PC-9 (cell line): ENCODE measurements at regions of chr11 and their contacts with region 1.

Region 1: GRCh38 chr11:108497317-108498045 is 703 bp downstream of the POGLUT3 start:
- DNase-seq: peak; percentile 83 to 98
- H3K4me3 ChIP-seq: peak overlapping the region; percentile 78
- H3K27ac ChIP-seq: peak overlapping the region; percentile 87
- H3K4me1 ChIP-seq: peaks cover 24% of the 10 kb centered on the region
- H3K27me3 ChIP-seq: no peaks in the 10 kb centered on the region
- CTCF ChIP-seq: 0 out of 2 replicates have a peak, but pooled peaks have one; percentile 6

Region 2: GRCh38 chr11:108467091-108467823 is 30.2 kb before region 1 on chr11 and contains the start of gene C11orf65:
- CTCF ChIA-PET with region 1: no interaction called
- POLR2A ChIA-PET with region 1: no interaction called
- intact Hi-C with region 1: loop called (anchors 1 kb)
- DNase-seq: peak; percentile 93 to 94
- H3K4me3 ChIP-seq: peak within 1 kb of the TSS; percentile 80
- H3K27ac ChIP-seq: peak within 1 kb of the TSS; percentile 92
- H3K4me1 ChIP-seq: peaks cover 16% of the 10 kb centered on the region
- H3K27me3 ChIP-seq: no peaks in the 10 kb centered on the region
- CTCF ChIP-seq: no peak
- total RNA-seq, gene C11orf65: 1.7 and 1.9 TPM in 2 replicates

Region 3: DNA sequence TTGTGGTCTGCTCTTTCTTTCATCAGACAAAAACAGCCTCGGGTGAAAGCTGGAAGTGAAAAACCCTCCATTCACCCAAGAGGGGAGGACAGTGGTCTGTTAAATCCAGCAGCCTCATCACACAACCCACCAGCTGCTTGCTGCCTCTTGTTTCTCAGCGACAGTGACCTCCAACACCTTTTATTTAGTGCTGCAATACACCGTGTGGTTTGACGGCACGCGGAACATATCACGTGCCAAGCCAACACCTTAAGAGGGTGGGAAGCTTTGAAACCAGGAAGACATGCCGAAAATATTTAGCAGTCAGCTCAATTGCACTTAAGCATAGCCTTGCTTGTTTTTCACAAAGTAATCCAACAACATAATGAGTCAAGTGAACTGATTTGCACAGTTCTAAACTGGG is 40.5 kb after region 1 on chr11:
- CTCF ChIA-PET with region 1: no interaction called
- POLR2A ChIA-PET with region 1: no interaction called
- intact Hi-C with region 1: no loop called
- DNase-seq: peak in 1 of 2 experiments; percentile 23
- H3K4me3 ChIP-seq: no peak overlapping the region
- H3K27ac ChIP-seq: no peak overlapping the region
- H3K4me1 ChIP-seq: no peaks in the 10 kb centered on the region
- H3K27me3 ChIP-seq: no peaks in the 10 kb centered on the region
- CTCF ChIP-seq: no peak

Region 4: DNA sequence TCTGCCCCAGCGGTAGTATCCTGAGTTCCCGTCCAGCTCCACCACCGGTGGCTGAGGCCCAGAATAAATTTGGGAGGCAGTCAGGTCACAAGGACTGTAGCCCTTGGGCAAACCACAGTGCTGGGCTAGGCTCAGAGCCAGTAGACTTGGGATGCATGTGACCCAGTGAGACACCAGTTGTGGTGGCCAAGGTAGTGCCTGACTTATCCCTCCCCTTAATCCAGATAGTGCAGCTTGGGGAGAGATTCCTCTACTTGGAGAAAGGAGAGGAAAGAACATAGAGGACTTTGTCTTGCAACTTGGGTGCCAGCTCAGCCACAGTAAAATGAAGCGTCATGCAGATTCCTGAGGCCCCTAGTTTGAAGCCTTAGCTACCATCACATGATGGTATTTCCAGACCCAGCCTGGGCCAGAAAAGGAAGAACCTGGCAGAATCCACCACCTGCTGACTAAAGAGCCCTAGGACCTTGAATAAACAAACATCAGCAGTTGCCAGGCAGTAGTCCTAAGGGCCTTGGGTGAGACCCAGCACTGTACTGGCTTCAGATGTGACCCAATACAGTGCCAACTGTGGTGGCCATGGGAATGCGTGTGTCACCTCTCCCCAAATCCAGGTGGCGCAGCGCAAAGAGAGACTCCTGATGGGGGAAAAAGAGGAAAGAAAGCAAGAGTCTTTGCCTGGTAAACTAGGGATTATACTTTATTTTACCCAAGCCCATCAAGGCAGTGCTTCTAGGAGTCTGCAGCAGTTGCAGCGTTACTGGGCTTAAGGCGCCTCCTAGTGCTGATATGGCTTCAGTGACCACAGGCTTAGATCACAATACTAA is 150.4 kb after region 1 on chr11:
- CTCF ChIA-PET with region 1: no interaction called
- POLR2A ChIA-PET with region 1: no interaction called
- intact Hi-C with region 1: loop called (anchors 2 kb)
- DNase-seq: peak; percentile 64 to 74
- H3K4me3 ChIP-seq: no peak overlapping the region
- H3K27ac ChIP-seq: no peak overlapping the region
- H3K4me1 ChIP-seq: no peaks in the 10 kb centered on the region
- H3K27me3 ChIP-seq: no peaks in the 10 kb centered on the region
- CTCF ChIP-seq: peak; percentile 95

Region 5: GRCh38 chr11:108853864-108854263 is 356.4 kb after region 1 on chr11:
- CTCF ChIA-PET with region 1: no interaction called
- POLR2A ChIA-PET with region 1: interaction called, 17 read pairs
- intact Hi-C with region 1: no loop called
- DNase-seq: no peak
- H3K4me3 ChIP-seq: no peak overlapping the region
- H3K27ac ChIP-seq: no peak overlapping the region
- H3K4me1 ChIP-seq: no peaks in the 10 kb centered on the region
- H3K27me3 ChIP-seq: no peaks in the 10 kb centered on the region
- CTCF ChIP-seq: no peak